Activated CD4-positive, alpha-beta T cell treated with anti-CD3 and anti-CD28 coated beads for 36 hours (primary cell): ENCODE measurements at regions of chr12 and their contacts with region 1.

Region 1: GRCh38 chr12:31896514-31897039 is 62.6 kb upstream of the RESF1 start:
- DNase-seq: peak; percentile 90
- ATAC-seq: peak; percentile 97
- H3K4me3 Mint-ChIP-seq: peak overlapping the region; percentile 50
- H3K27ac Mint-ChIP-seq: peak overlapping the region; percentile 99
- H3K4me1 Mint-ChIP-seq: peaks cover 57% of the 10 kb centered on the region
- H3K27me3 Mint-ChIP-seq: no peaks in the 10 kb centered on the region

Region 2: GRCh38 chr12:31325877-31326631 is 570.5 kb before region 1 on chr12 and contains the start of gene SINHCAF:
- CTCF ChIA-PET with region 1: no interaction called
- POLR2A ChIA-PET with region 1: no interaction called
- intact Hi-C with region 1: loop called in 1 of 2 experiments (anchors 5 kb)
- DNase-seq: peak; percentile 100
- ATAC-seq: peak; percentile 72
- H3K4me3 Mint-ChIP-seq: peak within 1 kb of the TSS; percentile 100
- H3K27ac Mint-ChIP-seq: peak within 1 kb of the TSS; percentile 95
- H3K4me1 Mint-ChIP-seq: peaks cover 24% of the 10 kb centered on the region
- H3K27me3 Mint-ChIP-seq: no peaks in the 10 kb centered on the region
- total RNA-seq, gene SINHCAF: 187 to 211 TPM

Region 3: DNA sequence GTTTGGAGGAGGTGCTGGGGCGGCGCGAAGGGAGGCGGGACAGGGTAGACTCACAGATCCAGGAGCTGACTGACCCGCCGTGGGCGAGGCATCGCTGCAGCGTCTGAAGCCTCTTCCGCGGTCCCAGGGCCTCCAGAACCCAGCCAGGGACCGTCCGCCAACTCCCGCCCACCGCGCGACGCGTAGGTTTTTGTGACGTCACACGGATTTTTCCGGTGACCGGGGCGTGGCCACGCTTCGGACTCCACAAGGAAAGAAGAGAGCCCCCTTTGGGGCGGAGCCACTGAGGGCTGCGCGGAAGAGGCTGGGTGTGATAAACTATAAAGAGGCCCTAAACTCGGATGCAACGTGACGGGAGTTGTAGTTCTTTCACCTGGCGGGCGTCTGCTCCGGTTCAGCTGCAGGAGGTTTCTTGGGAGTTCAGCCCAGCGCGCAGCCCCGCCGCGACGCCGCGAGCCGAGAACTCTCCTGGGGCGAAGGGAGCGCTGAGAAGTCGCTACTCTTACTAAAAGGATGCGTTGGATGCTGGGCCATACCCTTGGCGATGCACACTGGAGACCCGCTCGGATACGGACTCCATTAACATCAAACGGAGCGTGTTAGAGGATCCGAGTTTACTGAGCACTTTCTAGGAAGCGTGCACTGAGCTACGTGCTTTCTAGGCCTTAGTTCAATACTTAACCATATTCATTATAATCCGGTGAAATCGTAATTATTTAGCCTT is 167.5 kb before region 1 on chr12 and contains the start of gene AMN1:
- CTCF ChIA-PET with region 1: no interaction called
- POLR2A ChIA-PET with region 1: interaction called, 9 read pairs
- intact Hi-C with region 1: loop called (anchors 1 kb)
- DNase-seq: peak; percentile 99
- ATAC-seq: peak; percentile 92
- H3K4me3 Mint-ChIP-seq: peak within 1 kb of the TSS; percentile 89
- H3K27ac Mint-ChIP-seq: peak within 1 kb of the TSS; percentile 99
- H3K4me1 Mint-ChIP-seq: peaks cover 52% of the 10 kb centered on the region
- H3K27me3 Mint-ChIP-seq: no peaks in the 10 kb centered on the region
- total RNA-seq, gene AMN1: 5.1 to 5.8 TPM

Region 4: DNA sequence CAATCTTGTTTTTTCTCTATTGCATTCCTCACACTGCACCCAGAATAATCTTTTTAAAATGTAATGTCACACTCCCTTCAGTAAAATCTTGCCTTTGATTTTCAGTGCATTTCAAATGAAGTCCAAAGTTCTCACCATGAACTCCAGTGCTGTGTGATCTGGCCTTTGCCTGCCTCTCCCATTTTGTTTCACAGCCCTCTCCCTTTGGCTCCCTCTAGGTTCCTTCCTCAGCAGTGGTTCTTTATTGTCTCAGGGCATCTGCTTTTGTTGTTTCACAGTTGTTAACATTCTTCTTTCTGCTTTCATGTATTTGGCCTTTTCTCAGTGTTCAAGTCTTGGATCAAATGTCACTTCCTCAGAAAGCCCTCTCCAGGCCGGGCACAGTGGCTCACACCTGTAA is 83.3 kb before region 1 on chr12:
- CTCF ChIA-PET with region 1: no interaction called
- POLR2A ChIA-PET with region 1: no interaction called
- intact Hi-C with region 1: loop called in 1 of 2 experiments (anchors 5 kb)
- DNase-seq: no peak
- ATAC-seq: no peak
- H3K4me3 Mint-ChIP-seq: no peak overlapping the region
- H3K27ac Mint-ChIP-seq: no peak overlapping the region
- H3K4me1 Mint-ChIP-seq: peaks cover 17% of the 10 kb centered on the region
- H3K27me3 Mint-ChIP-seq: no peaks in the 10 kb centered on the region

Region 5: DNA sequence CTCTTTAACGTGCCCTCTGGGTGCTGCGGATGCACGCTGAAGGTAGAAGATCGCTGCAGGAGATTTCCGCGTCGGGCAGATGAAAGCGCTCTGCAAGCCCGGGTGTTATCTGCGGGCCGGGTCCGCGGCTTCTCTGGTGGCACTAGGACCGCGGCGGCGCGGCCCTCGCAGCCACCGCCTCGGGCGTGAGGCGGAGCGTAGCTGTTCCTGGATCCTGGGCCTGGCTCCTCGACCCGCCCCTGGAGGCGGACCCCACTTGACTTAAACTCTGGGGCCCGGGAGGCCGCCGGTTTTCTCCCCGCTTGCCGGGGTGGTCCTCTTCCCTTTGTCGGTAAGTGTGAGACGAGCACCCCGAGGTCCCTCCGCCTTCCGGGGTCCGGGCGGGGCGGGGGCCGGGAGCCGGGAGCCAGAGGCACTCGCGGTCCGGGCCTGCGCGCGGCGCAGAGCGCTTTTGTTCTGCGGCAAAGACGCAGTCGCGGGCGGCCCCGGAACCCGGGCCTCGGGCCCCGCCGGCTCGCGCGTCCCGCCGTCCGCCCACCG is 62.7 kb after region 1 on chr12 and contains the start of gene RESF1:
- CTCF ChIA-PET with region 1: no interaction called
- POLR2A ChIA-PET with region 1: interaction called, 8 read pairs
- intact Hi-C with region 1: loop called (anchors 1 kb)
- DNase-seq: peak; percentile 90
- ATAC-seq: peak; percentile 83
- H3K4me3 Mint-ChIP-seq: peak within 1 kb of the TSS; percentile 89
- H3K27ac Mint-ChIP-seq: peak within 1 kb of the TSS; percentile 97
- H3K4me1 Mint-ChIP-seq: peaks cover 72% of the 10 kb centered on the region
- H3K27me3 Mint-ChIP-seq: no peaks in the 10 kb centered on the region
- total RNA-seq, gene RESF1: 52.0 to 78.8 TPM

Region 6: GRCh38 chr12:31970199-31970598 is 73.6 kb after region 1 on chr12:
- CTCF ChIA-PET with region 1: no interaction called
- POLR2A ChIA-PET with region 1: no interaction called
- intact Hi-C with region 1: no loop called
- DNase-seq: no peak
- ATAC-seq: no peak
- H3K4me3 Mint-ChIP-seq: no peak overlapping the region
- H3K27ac Mint-ChIP-seq: peak overlapping the region; percentile 75
- H3K4me1 Mint-ChIP-seq: peaks cover 39% of the 10 kb centered on the region
- H3K27me3 Mint-ChIP-seq: no peaks in the 10 kb centered on the region

Region 7: DNA sequence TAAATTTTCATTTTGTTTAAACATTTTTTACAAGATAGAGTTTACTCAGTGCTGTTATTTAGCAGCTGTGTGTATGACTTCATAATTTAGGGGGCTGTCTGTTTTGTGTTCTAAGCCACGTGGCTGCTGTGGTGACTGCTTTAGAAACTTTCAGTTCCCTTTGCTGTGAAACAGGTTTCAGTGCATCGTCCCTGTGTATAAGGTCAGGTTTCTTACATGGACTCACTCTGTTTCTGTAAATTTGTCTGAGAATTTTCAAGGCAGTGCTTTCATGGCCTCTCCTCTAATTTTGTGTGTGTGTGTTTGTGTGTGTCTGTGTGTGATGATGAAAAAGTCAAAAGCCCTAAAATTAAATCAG is 242.5 kb after region 1 on chr12:
- CTCF ChIA-PET with region 1: interaction called, 3 read pairs
- POLR2A ChIA-PET with region 1: interaction called, 4 read pairs
- intact Hi-C with region 1: loop called in 1 of 2 experiments (anchors 1 kb)
- DNase-seq: peak; percentile 73
- ATAC-seq: peak; percentile 64
- H3K4me3 Mint-ChIP-seq: peak overlapping the region; percentile 66
- H3K27ac Mint-ChIP-seq: peak overlapping the region; percentile 28
- H3K4me1 Mint-ChIP-seq: peaks cover 28% of the 10 kb centered on the region
- H3K27me3 Mint-ChIP-seq: peaks cover 11% of the 10 kb centered on the region